MCF 10A (cell line): ENCODE measurements at regions of chr18 and their contacts with region 1.

Region 1: GRCh38 chr18:49813319-49814146 is at the start of gene ACAA2:
- DNase-seq: peak; percentile 95
- H3K4me3 Mint-ChIP-seq: peak within 1 kb of the TSS; percentile 94
- H3K27ac Mint-ChIP-seq: peak within 1 kb of the TSS; percentile 97
- H3K4me1 Mint-ChIP-seq: peaks cover 28% of the 10 kb centered on the region
- H3K27me3 Mint-ChIP-seq: no peaks in the 10 kb centered on the region
- CTCF ChIP-seq: no peak
- total RNA-seq, gene ACAA2: 82.9 and 84.9 TPM in 2 replicates

Region 2: GRCh38 chr18:49668574-49669275 is 144.8 kb before region 1 on chr18:
- CTCF ChIA-PET with region 1: no interaction called
- POLR2A ChIA-PET with region 1: no interaction called
- intact Hi-C with region 1: no loop called
- DNase-seq: no peak
- H3K4me3 Mint-ChIP-seq: no peak overlapping the region
- H3K27ac Mint-ChIP-seq: no peak overlapping the region
- H3K4me1 Mint-ChIP-seq: peaks cover 11% of the 10 kb centered on the region
- H3K27me3 Mint-ChIP-seq: no peaks in the 10 kb centered on the region
- CTCF ChIP-seq: no peak

Region 3: GRCh38 chr18:49784427-49785185 is 28.9 kb before region 1 on chr18:
- CTCF ChIA-PET with region 1: interaction called, 3 read pairs
- POLR2A ChIA-PET with region 1: interaction called, 13 read pairs
- intact Hi-C with region 1: no loop called
- DNase-seq: no peak
- H3K4me3 Mint-ChIP-seq: no peak overlapping the region
- H3K27ac Mint-ChIP-seq: no peak overlapping the region
- H3K4me1 Mint-ChIP-seq: peaks cover 14% of the 10 kb centered on the region
- H3K27me3 Mint-ChIP-seq: no peaks in the 10 kb centered on the region
- CTCF ChIP-seq: peak; percentile 31

Region 4: DNA sequence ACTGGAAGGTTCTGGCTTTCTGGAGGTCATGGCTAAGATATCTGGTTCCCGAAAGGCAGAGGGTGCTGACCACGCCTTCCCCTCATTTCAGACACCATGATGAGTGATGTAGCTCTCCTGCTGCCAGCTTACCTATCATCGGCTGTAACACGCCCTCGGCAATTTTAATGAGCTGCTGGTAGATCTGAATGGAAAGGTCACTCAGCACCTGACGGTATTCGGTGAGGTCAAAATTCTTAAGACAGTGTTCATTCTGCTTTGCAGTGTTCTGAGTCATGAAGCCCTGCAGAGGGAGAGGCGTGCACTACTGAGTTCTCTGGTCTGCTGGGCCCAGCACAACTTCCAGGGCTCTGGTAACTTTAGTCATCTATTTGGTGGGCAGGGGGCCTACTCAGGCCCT is 25.5 kb after region 1 on chr18:
- CTCF ChIA-PET with region 1: interaction called, 3 read pairs
- POLR2A ChIA-PET with region 1: interaction called, 84 read pairs
- intact Hi-C with region 1: loop called (anchors 1 kb)
- DNase-seq: peak; percentile 83
- H3K4me3 Mint-ChIP-seq: no peak overlapping the region
- H3K27ac Mint-ChIP-seq: peak overlapping the region; percentile 77
- H3K4me1 Mint-ChIP-seq: peaks cover 22% of the 10 kb centered on the region
- H3K27me3 Mint-ChIP-seq: no peaks in the 10 kb centered on the region
- CTCF ChIP-seq: no peak

Region 5: DNA sequence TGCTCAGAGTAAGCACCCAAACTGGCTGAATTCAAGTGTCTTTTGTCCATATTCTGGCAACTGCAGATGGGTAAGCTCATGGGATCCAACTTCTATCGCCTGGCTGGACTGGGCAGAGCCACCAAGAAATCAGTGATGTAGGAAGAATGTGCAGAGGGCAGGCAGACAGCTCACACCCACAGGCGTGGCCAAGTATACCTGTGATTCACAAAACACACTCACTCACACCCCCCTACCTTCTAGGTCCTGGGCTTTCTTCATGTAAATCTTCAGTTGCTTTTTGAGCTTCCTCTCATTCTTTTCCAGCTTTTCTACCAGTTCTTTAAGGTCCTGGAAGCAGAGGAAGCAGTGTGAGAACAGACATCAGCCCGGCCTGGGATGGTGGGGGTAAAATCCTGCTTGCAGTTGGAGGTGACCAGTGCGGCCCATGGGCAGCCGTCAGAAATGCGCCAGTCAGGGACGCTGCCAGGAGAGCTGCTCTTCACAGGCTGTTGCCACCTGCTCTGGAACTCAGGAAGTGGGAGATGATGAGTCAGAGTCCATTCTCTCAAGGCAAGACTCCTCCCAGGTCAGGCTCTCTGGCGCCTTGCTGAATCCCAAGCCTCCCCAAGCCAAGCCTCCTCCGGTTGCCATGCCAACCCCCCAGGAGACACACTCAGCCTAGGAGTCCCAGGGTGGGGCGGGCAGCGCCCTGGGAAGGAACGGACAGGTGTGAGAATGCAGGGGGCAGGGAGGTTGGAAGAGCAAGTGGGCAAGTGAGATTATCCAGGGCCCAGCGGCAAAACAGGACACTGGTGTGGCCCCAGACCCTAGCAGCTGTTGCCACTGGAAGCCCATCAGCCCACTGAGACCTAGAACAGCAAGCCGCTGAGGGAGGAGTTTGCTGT is 36.0 kb after region 1 on chr18:
- CTCF ChIA-PET with region 1: interaction called, 33 read pairs
- POLR2A ChIA-PET with region 1: interaction called, 55 read pairs
- intact Hi-C with region 1: no loop called
- DNase-seq: peak; percentile 98
- H3K4me3 Mint-ChIP-seq: peak overlapping the region; percentile 72
- H3K27ac Mint-ChIP-seq: peak overlapping the region; percentile 98
- H3K4me1 Mint-ChIP-seq: peaks cover 42% of the 10 kb centered on the region
- H3K27me3 Mint-ChIP-seq: no peaks in the 10 kb centered on the region
- CTCF ChIP-seq: no peak

Region 6: DNA sequence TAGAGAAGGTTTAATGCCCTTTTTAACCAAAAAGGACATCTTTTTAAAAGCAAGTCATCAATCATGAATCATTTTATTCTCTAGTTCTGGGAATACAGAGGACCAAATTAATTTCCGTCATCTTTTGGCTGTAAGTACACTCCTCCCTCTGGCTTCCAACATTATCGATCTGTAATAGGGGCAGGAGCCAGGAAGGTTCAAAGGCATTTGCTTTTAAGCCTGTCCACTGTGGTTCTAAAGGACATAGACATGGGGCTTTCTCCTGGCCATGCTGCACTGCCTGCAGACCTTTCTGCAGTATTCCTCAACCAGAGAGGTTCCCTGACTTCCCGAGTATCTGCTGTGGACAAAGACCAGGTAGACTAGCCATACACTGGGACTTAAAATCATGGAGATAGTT is 210.9 kb after region 1 on chr18:
- CTCF ChIA-PET with region 1: no interaction called
- POLR2A ChIA-PET with region 1: no interaction called
- intact Hi-C with region 1: no loop called
- DNase-seq: no peak
- H3K4me3 Mint-ChIP-seq: no peak overlapping the region
- H3K27ac Mint-ChIP-seq: no peak overlapping the region
- H3K4me1 Mint-ChIP-seq: no peaks in the 10 kb centered on the region
- H3K27me3 Mint-ChIP-seq: no peaks in the 10 kb centered on the region
- CTCF ChIP-seq: no peak

Region 7: GRCh38 chr18:50158923-50159653 is 345.6 kb after region 1 on chr18:
- CTCF ChIA-PET with region 1: no interaction called
- POLR2A ChIA-PET with region 1: no interaction called
- intact Hi-C with region 1: no loop called
- DNase-seq: no peak
- H3K4me3 Mint-ChIP-seq: no peak overlapping the region
- H3K27ac Mint-ChIP-seq: no peak overlapping the region
- H3K4me1 Mint-ChIP-seq: peaks cover 23% of the 10 kb centered on the region
- H3K27me3 Mint-ChIP-seq: no peaks in the 10 kb centered on the region
- CTCF ChIP-seq: no peak